ENCODE measurements at regions of chr17 and their contacts with region 1.

Region 1: GRCh38 chr17:74742153-74742515 is 5.1 kb downstream of the RAB37 start:
- DNase-seq: peak; percentile 71
- H3K4me3 Mint-ChIP-seq: peak overlapping the region; percentile 63
- H3K27ac Mint-ChIP-seq: peak overlapping the region; percentile 88
- H3K4me1 Mint-ChIP-seq: peaks cover 86% of the 10 kb centered on the region
- H3K27me3 Mint-ChIP-seq: no peaks in the 10 kb centered on the region

Region 2: GRCh38 chr17:74296548-74296936 is 445.6 kb before region 1 on chr17:
- intact Hi-C with region 1: no loop called
- DNase-seq: peak; percentile 24
- H3K4me3 Mint-ChIP-seq: no peak overlapping the region
- H3K27ac Mint-ChIP-seq: no peak overlapping the region
- H3K4me1 Mint-ChIP-seq: peaks cover 21% of the 10 kb centered on the region
- H3K27me3 Mint-ChIP-seq: peaks cover 11% of the 10 kb centered on the region

Region 3: DNA sequence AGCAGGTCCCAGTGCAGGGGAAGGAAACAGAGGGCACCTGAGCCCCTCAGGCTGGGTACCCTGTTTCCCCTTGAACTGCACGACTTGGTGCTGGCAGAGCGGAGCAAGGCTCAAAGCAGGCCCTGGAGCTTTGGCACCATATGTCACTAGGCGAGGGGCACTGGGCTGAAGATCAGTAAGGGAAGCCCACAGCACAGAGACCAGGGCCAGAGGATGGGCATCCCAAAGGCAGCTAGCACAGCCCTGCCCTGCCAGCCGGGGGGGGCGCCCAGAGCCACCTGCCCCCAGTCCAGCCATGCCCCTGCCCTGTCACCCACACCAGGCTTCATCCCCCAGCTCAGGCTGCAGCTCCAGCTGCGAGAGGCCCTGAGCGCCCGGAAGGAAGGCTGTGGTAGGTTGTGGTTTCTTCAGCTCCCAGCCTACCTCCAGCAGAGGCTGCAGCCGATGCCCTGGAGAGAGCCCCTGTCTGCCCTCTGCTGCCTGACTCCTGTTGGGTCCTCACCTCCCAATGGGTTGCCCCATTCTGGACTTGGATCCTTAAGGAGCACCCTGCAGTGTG is 17.2 kb after region 1 on chr17:
- intact Hi-C with region 1: loop called (anchors 2 kb)
- DNase-seq: peak; percentile 57
- H3K4me3 Mint-ChIP-seq: peak overlapping the region; percentile 75
- H3K27ac Mint-ChIP-seq: peak overlapping the region; percentile 68
- H3K4me1 Mint-ChIP-seq: peaks cover 54% of the 10 kb centered on the region
- H3K27me3 Mint-ChIP-seq: no peaks in the 10 kb centered on the region

Measured in activated T-helper 1 cell treated with anti-CD3 and anti-CD28 coated beads, Interleukin-12 subunit alpha, Interleukin-12 subunit beta, Interleukin-2, Interleukin-4 antibody, amounts not matched to agents 30 ng/mL and 10 ng/mL and 1 ng/mL, durations not matched to agents 14 hours and 24 hours and 36 hours (primary cell).